Naive thymus-derived CD4-positive, alpha-beta T cell (primary cell): ENCODE measurements at regions of chr11 and their contacts with region 1.

Region 1: GRCh38 chr11:9250139-9250582 is 15.0 kb downstream of the DENND5A start:
- DNase-seq: peak in 8 of 9 donors; percentile 40 to 83 (median 70)
- ATAC-seq: peak; percentile 92
- H3K4me3 ChIP-seq: peak overlapping the region; percentile 29
- H3K4me3 Mint-ChIP-seq: peak overlapping the region; percentile 62 to 84 (median 75)
- H3K27ac ChIP-seq: peak overlapping the region; percentile 62
- H3K27ac Mint-ChIP-seq: peak overlapping the region; percentile 67 to 94 (median 83)
- H3K4me1 ChIP-seq: peaks cover 14 to 72% of the 10 kb centered on the region in 2 donors
- H3K4me1 Mint-ChIP-seq: peaks cover 44 to 91% (median 69%) of the 10 kb centered on the region in 7 donors
- H3K27me3 ChIP-seq: no peaks in the 10 kb centered on the region
- H3K27me3 Mint-ChIP-seq: no peaks in the 10 kb centered on the region

Region 2: DNA sequence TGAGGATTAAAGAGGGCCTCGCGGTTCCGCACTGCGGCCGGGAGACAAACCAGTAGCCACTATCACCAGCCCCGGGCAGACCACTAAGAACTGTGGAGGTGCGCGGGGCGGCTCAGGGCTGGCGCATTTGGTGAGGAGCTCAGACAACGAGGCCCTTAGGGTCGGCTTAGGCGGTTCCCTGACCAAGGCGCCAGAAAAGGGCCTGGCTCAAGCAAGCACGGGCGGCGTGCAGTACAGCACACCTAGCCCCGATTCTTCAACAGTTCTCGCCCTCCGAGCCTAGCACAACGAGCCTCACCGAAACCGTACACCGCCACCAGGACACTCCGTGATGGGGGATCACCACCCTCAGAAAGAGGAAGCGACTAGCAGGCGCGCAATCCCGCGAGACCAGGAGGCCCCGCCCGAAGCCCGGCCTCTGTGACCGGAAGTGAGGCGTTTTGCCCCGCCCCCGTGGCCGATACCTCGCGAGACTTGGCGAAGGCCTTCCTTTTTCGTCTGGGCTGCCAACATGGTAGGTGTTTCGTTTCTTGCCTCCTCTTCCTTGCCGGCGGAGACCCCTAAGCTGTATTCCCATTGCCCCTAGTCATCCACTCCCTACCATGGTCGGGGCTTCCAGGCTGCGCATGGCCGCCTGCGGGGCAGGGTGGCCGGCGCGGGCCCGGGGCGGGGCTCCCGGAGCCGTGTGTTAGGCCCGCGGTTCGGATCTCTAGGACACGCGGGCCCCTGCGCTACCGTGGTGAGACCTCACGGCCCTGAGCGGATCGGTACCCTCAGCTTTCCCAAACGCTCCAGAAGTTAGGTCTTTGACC is 567.7 kb before region 1 on chr11 and contains the starts of genes RPL27A and TRIM66:
- CTCF ChIA-PET with region 1: no interaction called
- POLR2A ChIA-PET with region 1: no interaction called
- intact Hi-C with region 1: loop called in 1 of 2 experiments (anchors 5 kb)
- DNase-seq: peak; percentile 97 to 100 (median 99)
- ATAC-seq: peak; percentile 98
- H3K4me3 ChIP-seq: peak within 1 kb of the TSS; percentile 73
- H3K4me3 Mint-ChIP-seq: peak within 1 kb of the TSS; percentile 89 to 97 (median 96)
- H3K27ac ChIP-seq: peak within 1 kb of the TSS; percentile 99
- H3K27ac Mint-ChIP-seq: peak within 1 kb of the TSS; percentile 97 to 99 (median 98)
- H3K4me1 ChIP-seq: peaks cover 17% of the 10 kb centered on the region in 2 donors
- H3K4me1 Mint-ChIP-seq: peaks cover 30 to 57% (median 43%) of the 10 kb centered on the region in 7 donors
- H3K27me3 ChIP-seq: no peaks in the 10 kb centered on the region
- H3K27me3 Mint-ChIP-seq: no peaks in the 10 kb centered on the region
- total RNA-seq, gene RPL27A: 758 to 2,116 (median 1,670) TPM
- total RNA-seq, gene TRIM66: 16.0 to 37.6 (median 24.2) TPM

Region 3: DNA sequence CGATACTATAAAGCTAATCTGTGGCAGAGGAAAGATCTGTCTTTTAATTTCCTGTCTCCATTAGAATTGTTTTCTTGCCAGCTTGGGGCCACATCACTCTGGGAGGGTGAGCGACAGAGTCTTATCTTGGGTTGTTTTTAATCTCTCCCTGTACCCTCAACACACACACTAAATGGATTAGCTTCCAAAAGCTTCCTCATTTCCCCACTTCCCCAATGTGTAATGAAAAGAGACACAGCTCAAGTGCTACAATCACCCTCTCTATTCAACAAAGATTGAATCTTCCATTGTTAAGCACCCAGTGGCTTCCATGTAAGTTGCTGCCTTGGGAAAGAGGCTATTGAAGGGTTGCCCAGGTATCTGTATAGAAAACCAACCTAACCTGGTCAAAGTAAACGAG is 301.3 kb before region 1 on chr11:
- CTCF ChIA-PET with region 1: no interaction called
- POLR2A ChIA-PET with region 1: no interaction called
- intact Hi-C with region 1: no loop called
- DNase-seq: no peak
- ATAC-seq: no peak
- H3K4me3 ChIP-seq: no peak overlapping the region
- H3K4me3 Mint-ChIP-seq: no peak overlapping the region
- H3K27ac ChIP-seq: no peak overlapping the region
- H3K27ac Mint-ChIP-seq: peak overlapping the region in 1 of 9 donors; percentile 55
- H3K4me1 ChIP-seq: no peaks in the 10 kb centered on the region
- H3K4me1 Mint-ChIP-seq: peaks cover 0 to 4% (median 0%) of the 10 kb centered on the region in 7 donors
- H3K27me3 ChIP-seq: no peaks in the 10 kb centered on the region
- H3K27me3 Mint-ChIP-seq: peaks cover 0 to 4% (median 0%) of the 10 kb centered on the region in 5 donors

Region 4: DNA sequence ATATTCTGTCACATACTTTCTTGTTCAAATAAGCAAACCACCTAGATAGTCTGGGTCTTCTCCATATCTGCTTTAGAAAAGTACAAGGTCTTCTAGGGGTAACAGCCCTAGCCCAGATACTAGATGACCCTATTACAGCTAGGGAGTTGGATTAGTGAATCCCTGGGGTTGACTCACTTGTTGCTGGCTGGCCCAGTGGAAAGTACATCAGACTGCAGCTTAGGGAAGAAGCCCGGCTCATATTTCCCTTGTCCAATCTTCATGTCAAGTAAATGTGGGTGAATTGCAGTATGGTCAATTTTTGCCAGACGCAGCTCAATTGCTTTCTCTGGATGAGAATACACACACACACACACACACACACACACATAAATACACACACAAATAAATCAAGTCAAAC is 79.7 kb before region 1 on chr11:
- CTCF ChIA-PET with region 1: interaction called, 3 read pairs
- POLR2A ChIA-PET with region 1: no interaction called
- intact Hi-C with region 1: loop called in 1 of 2 experiments (anchors 5 kb)
- DNase-seq: no peak
- ATAC-seq: no peak
- H3K4me3 ChIP-seq: no peak overlapping the region
- H3K4me3 Mint-ChIP-seq: no peak overlapping the region
- H3K27ac ChIP-seq: no peak overlapping the region
- H3K27ac Mint-ChIP-seq: peak overlapping the region in 1 of 9 donors; percentile 27
- H3K4me1 ChIP-seq: no peaks in the 10 kb centered on the region
- H3K4me1 Mint-ChIP-seq: peaks cover 0 to 37% (median 14%) of the 10 kb centered on the region in 7 donors
- H3K27me3 ChIP-seq: no peaks in the 10 kb centered on the region
- H3K27me3 Mint-ChIP-seq: no peaks in the 10 kb centered on the region

Region 5: DNA sequence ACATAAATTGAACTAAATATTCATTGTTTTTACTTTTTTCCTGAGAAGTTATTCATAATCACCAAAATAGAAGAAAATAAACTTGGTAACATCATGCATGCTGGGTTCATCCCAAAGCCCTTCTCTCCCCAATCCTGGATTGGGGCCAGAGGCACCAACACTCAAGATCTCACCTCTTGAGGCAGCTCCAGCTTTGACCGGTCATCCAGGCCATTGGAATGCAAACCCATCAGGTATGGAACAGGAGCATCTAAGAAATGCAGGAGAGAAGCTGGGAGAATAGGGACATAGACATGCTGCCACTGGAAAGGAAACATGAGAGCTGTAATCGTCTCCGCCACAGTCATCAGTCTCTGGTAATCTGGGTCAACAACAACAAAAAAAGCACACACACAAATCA is 56.8 kb before region 1 on chr11:
- CTCF ChIA-PET with region 1: no interaction called
- POLR2A ChIA-PET with region 1: no interaction called
- intact Hi-C with region 1: no loop called
- DNase-seq: no peak
- ATAC-seq: no peak
- H3K4me3 ChIP-seq: no peak overlapping the region
- H3K4me3 Mint-ChIP-seq: no peak overlapping the region
- H3K27ac ChIP-seq: no peak overlapping the region
- H3K27ac Mint-ChIP-seq: no peak overlapping the region
- H3K4me1 ChIP-seq: no peaks in the 10 kb centered on the region
- H3K4me1 Mint-ChIP-seq: peaks cover 0 to 9% (median 5%) of the 10 kb centered on the region in 7 donors
- H3K27me3 ChIP-seq: no peaks in the 10 kb centered on the region
- H3K27me3 Mint-ChIP-seq: no peaks in the 10 kb centered on the region

Region 6: GRCh38 chr11:9231848-9232177 is 18.3 kb before region 1 on chr11:
- CTCF ChIA-PET with region 1: no interaction called
- POLR2A ChIA-PET with region 1: interaction called, 4 read pairs
- intact Hi-C with region 1: loop called (anchors 2 kb)
- DNase-seq: peak in 4 of 9 donors; percentile 17 to 40 (median 36)
- ATAC-seq: peak; percentile 72
- H3K4me3 ChIP-seq: peak overlapping the region; percentile 27
- H3K4me3 Mint-ChIP-seq: peak overlapping the region; percentile 73 to 89 (median 84)
- H3K27ac ChIP-seq: no peak overlapping the region
- H3K27ac Mint-ChIP-seq: peak overlapping the region; percentile 56 to 90 (median 81)
- H3K4me1 ChIP-seq: peaks cover 0 to 22% of the 10 kb centered on the region in 2 donors
- H3K4me1 Mint-ChIP-seq: peaks cover 52 to 79% (median 72%) of the 10 kb centered on the region in 7 donors
- H3K27me3 ChIP-seq: no peaks in the 10 kb centered on the region
- H3K27me3 Mint-ChIP-seq: no peaks in the 10 kb centered on the region

Region 7: GRCh38 chr11:9259981-9260837 is 10.0 kb after region 1 on chr11:
- CTCF ChIA-PET with region 1: interaction called, 4 read pairs
- POLR2A ChIA-PET with region 1: interaction called, 15 read pairs
- intact Hi-C with region 1: loop called (anchors 1 kb)
- DNase-seq: no peak
- ATAC-seq: no peak
- H3K4me3 ChIP-seq: no peak overlapping the region
- H3K4me3 Mint-ChIP-seq: peak overlapping the region; percentile 14 to 73 (median 59)
- H3K27ac ChIP-seq: no peak overlapping the region
- H3K27ac Mint-ChIP-seq: peak overlapping the region in 7 of 9 donors; percentile 0 to 83 (median 56)
- H3K4me1 ChIP-seq: peaks cover 11 to 37% of the 10 kb centered on the region in 2 donors
- H3K4me1 Mint-ChIP-seq: peaks cover 28 to 68% (median 55%) of the 10 kb centered on the region in 7 donors
- H3K27me3 ChIP-seq: no peaks in the 10 kb centered on the region
- H3K27me3 Mint-ChIP-seq: peaks cover 0 to 14% (median 0%) of the 10 kb centered on the region in 5 donors

Region 8: DNA sequence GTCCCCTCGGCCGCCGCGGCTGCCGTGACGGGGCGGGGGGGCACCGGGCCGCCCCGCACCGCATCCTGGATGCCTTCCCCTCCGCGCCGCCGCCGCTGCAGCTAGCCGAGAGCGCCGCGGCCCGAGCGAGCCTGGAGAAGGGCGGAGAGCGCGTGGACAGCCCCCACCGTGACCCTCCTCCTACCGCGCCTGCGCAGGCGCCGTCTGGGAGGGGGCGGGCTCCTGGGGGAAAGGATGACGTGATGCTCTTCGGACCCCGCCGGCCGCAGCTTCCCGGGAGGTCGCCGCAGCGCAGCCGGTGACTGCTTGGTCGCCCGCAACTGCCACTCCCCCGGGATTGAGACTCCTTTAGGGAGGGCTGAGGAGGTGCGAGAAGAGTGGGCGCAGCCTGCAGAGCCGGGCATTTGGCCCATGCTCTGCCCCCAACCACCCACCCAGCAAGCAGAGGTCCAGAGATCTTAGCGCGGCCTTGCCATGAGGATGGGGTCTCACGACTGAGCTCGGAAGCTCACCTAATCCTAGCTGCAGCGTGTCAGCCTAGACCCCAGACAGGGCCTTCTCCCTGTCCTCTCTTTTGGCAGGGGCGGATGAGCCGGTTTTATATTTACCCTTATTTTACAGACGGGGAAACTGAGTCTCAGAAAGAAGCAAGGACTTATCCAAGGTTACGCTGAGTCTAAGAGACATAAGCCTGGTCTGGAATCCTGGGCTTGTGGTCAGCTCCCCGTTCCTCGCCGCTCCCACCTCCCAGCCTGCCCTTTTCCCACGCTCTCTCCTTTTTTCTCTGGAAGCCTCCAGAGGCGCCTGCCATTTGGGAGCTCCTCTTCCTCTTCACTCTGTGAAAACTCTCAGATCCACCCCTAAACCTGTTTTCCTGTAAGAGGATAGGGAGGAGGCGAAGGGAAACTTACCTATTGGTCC is 15.3 kb after region 1 on chr11 and contains the start of gene DENND5A:
- CTCF ChIA-PET with region 1: interaction called, 4 read pairs
- POLR2A ChIA-PET with region 1: interaction called, 15 read pairs
- intact Hi-C with region 1: loop called (anchors 1 kb)
- DNase-seq: peak; percentile 12 to 65 (median 34)
- ATAC-seq: peak; percentile 74
- H3K4me3 ChIP-seq: peak within 1 kb of the TSS; percentile 72
- H3K4me3 Mint-ChIP-seq: peak within 1 kb of the TSS; percentile 87 to 100 (median 97)
- H3K27ac ChIP-seq: peak within 1 kb of the TSS; percentile 72
- H3K27ac Mint-ChIP-seq: peak within 1 kb of the TSS; percentile 89 to 99 (median 95)
- H3K4me1 ChIP-seq: peaks cover 11 to 22% of the 10 kb centered on the region in 2 donors
- H3K4me1 Mint-ChIP-seq: peaks cover 25 to 43% (median 39%) of the 10 kb centered on the region in 7 donors
- H3K27me3 ChIP-seq: no peaks in the 10 kb centered on the region
- H3K27me3 Mint-ChIP-seq: peaks cover 0 to 46% (median 0%) of the 10 kb centered on the region in 5 donors
- total RNA-seq, gene DENND5A: 65.0 to 178 (median 108) TPM

Region 9: GRCh38 chr11:9280655-9281301 is 30.6 kb after region 1 on chr11:
- CTCF ChIA-PET with region 1: interaction called, 3 read pairs
- POLR2A ChIA-PET with region 1: interaction called, 5 read pairs
- intact Hi-C with region 1: loop called (anchors 1 kb)
- DNase-seq: peak in 8 of 9 donors; percentile 59 to 80 (median 72)
- ATAC-seq: peak; percentile 95
- H3K4me3 ChIP-seq: peak overlapping the region; percentile 37
- H3K4me3 Mint-ChIP-seq: peak overlapping the region; percentile 35 to 79 (median 77)
- H3K27ac ChIP-seq: peak overlapping the region; percentile 55
- H3K27ac Mint-ChIP-seq: peak overlapping the region; percentile 72 to 94 (median 82)
- H3K4me1 ChIP-seq: peaks cover 11 to 14% of the 10 kb centered on the region in 2 donors
- H3K4me1 Mint-ChIP-seq: peaks cover 11 to 36% (median 17%) of the 10 kb centered on the region in 7 donors
- H3K27me3 ChIP-seq: no peaks in the 10 kb centered on the region
- H3K27me3 Mint-ChIP-seq: no peaks in the 10 kb centered on the region